Heart right ventricle (tissue), 16 donors: ENCODE measurements at regions of chr3 and their contacts with region 1.

Region 1: DNA sequence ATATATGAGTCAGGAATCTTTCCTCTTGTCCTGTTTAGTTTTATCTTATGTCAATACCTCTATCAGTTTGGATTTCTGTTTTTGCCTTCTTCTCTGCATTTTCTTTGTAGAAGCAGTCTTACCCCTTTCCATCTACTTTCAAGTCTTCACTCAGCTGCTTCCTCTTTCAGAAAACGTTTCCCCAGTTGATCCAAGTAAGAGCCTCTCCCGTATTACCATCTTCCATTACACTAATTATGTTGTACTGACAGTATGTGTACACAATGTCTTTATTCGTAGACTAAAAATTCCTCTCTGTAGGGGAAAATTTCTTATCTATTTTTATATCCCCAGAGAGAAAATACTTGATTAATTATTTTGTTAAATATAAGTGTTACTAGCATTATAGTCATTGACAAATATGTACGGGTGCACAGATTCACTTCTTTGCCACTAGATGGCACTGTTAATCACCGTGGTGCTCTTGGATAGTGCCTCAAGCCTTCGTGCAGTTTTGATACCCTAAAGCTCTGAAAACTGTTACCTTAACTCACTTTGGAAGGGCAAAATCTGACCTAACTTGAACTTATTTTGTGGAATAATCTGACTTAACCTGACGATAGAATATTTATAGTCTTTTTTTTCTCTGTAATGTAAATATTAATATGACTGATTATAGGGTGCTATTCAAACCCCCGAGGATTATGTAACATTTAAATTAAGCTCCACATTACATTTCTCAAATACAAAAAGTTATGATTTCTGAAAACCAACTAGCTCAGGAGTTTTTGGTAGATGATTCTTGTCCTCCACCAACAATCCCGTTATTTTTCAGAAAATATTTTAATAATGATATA is 74.2 kb upstream of the POU1F1 start:
- DNase-seq: peak in 1 of 2 donors; percentile 6
- ATAC-seq: peak in 4 of 8 donors; percentile 54 to 83 (median 65)
- H3K4me3 ChIP-seq: no peak overlapping the region
- H3K27ac ChIP-seq: no peak overlapping the region
- H3K4me1 ChIP-seq: no peaks in the 10 kb centered on the region
- H3K27me3 ChIP-seq: peaks cover 0 to 4% (median 0%) of the 10 kb centered on the region in 7 donors
- CTCF ChIP-seq: peak; percentile 63 to 96 (median 90)

Region 2: DNA sequence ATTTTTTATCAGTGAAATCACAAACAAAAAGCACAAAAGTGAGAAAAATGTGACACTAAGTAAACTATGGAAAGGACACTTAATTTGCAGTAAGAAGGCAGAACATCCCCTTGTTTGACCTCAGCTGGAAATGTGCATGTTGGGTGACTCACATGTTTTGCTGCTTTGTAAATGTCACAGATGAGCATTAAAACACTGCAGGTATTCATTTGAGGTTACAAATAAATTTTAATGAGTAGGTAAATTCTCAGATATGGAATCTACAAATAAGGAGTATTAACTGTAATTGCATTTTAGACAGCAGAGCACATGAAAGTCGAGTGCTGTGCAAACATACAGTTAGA is 103.2 kb before region 1 on chr3:
- intact Hi-C with region 1: no loop called
- DNase-seq: no peak
- ATAC-seq: no peak
- H3K4me3 ChIP-seq: no peak overlapping the region
- H3K27ac ChIP-seq: no peak overlapping the region
- H3K4me1 ChIP-seq: peaks cover 0 to 10% (median 4%) of the 10 kb centered on the region in 9 donors
- H3K27me3 ChIP-seq: no peaks in the 10 kb centered on the region
- CTCF ChIP-seq: no peak

Region 3: GRCh38 chr3:87997298-87997697 is 646.7 kb after region 1 on chr3:
- intact Hi-C with region 1: loop called in 6 of 10 experiments (anchors 5 to 10 kb)
- DNase-seq: no peak
- ATAC-seq: peak in 2 of 8 donors; percentile 51 to 54
- H3K4me3 ChIP-seq: peak overlapping the region in 1 of 10 donors; percentile 2
- H3K27ac ChIP-seq: peak overlapping the region in 1 of 10 donors; percentile 27
- H3K4me1 ChIP-seq: peaks cover 0 to 31% (median 0%) of the 10 kb centered on the region in 9 donors
- H3K27me3 ChIP-seq: peaks cover 0 to 8% (median 0%) of the 10 kb centered on the region in 7 donors
- CTCF ChIP-seq: no peak

Region 4: DNA sequence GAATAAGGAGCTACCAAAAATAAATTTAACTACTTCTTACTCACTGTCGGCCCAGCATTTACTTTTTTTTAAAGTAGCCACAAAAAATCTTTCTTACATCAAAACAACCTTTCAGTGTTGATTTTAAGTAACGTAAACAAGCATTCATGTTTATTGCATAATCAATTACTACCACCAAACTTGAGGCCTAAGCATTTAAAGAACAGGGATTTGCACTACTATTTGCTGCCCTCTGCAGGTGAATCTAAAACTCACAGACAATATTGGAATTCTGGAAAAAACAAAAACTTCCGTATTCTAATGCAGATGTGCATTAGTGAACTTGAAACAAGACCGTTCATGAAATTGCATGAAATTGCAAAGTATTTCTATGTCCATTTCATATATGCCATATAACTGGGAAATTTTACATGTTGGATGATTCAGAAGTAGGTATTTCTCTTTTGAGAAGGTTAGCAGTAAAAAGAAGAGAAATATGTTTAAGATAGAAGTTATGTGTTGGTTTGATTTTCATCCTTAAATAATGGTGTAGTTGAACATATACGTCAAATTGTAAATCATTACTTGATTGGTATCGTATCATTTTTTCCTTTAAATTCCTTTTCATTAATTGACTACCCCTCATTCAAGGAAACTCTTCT is 652.7 kb after region 1 on chr3:
- intact Hi-C with region 1: loop called in 8 of 10 experiments (anchors 1 to 10 kb)
- DNase-seq: no peak
- ATAC-seq: no peak
- H3K4me3 ChIP-seq: no peak overlapping the region
- H3K27ac ChIP-seq: no peak overlapping the region
- H3K4me1 ChIP-seq: peaks cover 0 to 13% (median 0%) of the 10 kb centered on the region in 9 donors
- H3K27me3 ChIP-seq: peaks cover 0 to 5% (median 0%) of the 10 kb centered on the region in 7 donors
- CTCF ChIP-seq: peak; percentile 29 to 81 (median 72)

Region 5: DNA sequence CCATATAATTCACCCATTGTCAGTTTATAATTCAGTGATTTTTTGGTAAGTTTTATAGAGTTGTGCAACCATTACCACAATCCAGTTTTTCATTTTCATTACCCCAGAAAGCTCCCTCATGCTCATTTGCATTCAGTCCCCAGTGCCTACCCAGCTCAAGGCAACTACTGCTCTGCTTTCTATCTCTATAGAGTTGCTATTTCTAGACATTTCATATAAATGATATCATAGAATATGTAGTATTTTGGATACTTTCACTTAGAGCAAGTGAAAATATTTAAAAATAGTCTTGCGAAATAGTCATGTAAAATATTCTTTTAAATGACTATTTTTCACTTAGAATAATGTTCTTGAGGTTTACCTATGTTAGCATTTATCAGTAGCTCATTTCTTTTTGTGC is 750.6 kb after region 1 on chr3:
- intact Hi-C with region 1: loop called in 1 of 10 experiments (anchors 5 kb)
- DNase-seq: no peak
- ATAC-seq: no peak
- H3K4me3 ChIP-seq: no peak overlapping the region
- H3K27ac ChIP-seq: no peak overlapping the region
- H3K4me1 ChIP-seq: peaks cover 0 to 13% (median 10%) of the 10 kb centered on the region in 9 donors
- H3K27me3 ChIP-seq: no peaks in the 10 kb centered on the region
- CTCF ChIP-seq: no peak

Region 6: GRCh38 chr3:88113311-88114162 is 763.0 kb after region 1 on chr3:
- intact Hi-C with region 1: loop called in 4 of 10 experiments (anchors 5 to 10 kb)
- DNase-seq: peak in 1 of 2 donors; percentile 74
- ATAC-seq: peak; percentile 72 to 90 (median 82)
- H3K4me3 ChIP-seq: no peak overlapping the region
- H3K27ac ChIP-seq: no peak overlapping the region
- H3K4me1 ChIP-seq: peaks cover 0 to 18% (median 5%) of the 10 kb centered on the region in 9 donors
- H3K27me3 ChIP-seq: no peaks in the 10 kb centered on the region
- CTCF ChIP-seq: peak; percentile 51 to 89 (median 77)

Region 7: GRCh38 chr3:88180398-88180999 is 829.9 kb after region 1 on chr3:
- intact Hi-C with region 1: loop called in 2 of 10 experiments (anchors 5 to 10 kb)
- DNase-seq: peak in 1 of 2 donors; percentile 9
- ATAC-seq: no peak
- H3K4me3 ChIP-seq: no peak overlapping the region
- H3K27ac ChIP-seq: no peak overlapping the region
- H3K4me1 ChIP-seq: no peaks in the 10 kb centered on the region
- H3K27me3 ChIP-seq: no peaks in the 10 kb centered on the region
- CTCF ChIP-seq: peak in 7 of 9 donors; percentile 24 to 70 (median 49)